Gastrocnemius medialis (tissue), 4 donors: ENCODE measurements at regions of chr16 and their contacts with region 1.

Region 1: DNA sequence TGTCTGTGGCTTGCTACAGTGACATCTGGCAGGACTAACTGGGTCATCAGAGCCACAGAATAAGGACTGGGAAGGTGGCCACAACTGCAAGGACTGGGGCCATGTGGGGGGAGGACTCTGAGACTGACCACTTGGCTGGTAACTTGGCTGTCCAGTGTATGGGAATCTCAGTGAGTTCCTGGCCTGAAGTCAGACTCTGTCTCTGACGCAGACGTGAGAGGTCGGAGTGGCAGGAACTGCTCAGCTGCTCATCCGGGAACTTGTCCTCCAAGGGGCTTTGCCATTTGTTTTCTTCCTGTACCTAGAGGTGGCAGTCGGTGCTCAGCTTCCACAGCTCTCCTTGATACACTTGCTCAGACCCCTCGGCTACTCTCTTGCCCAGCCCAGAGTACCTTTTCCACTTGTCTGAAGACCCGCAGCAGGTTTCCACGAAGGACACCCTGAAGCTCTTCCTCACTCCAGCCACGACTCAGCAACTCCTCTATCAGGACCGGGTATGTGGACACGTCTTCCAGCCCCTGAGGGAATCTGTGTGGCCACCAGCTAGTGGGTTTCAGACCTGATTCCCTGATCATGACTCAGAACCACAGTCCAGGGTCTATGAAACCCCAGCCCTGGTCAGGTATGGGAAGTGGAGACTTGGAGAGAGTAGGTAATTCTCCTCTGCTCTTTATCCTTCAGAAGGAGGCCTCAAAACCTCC is 7.3 kb upstream of the DPEP3 start:
- DNase-seq: peak; percentile 65 to 83
- ATAC-seq: peak; percentile 78 to 80
- H3K4me3 ChIP-seq: peak overlapping the region; percentile 10 to 49 (median 42)
- H3K27ac ChIP-seq: peak overlapping the region; percentile 83 to 93 (median 92)
- H3K4me1 ChIP-seq: peaks cover 64 to 65% of the 10 kb centered on the region in 2 donors
- H3K27me3 ChIP-seq: no peaks in the 10 kb centered on the region
- CTCF ChIP-seq: no peak
- POLR2A ChIP-seq: peak; percentile 53 to 62

Region 2: GRCh38 chr16:67277294-67277998 is 710.2 kb before region 1 on chr16:
- in situ Hi-C with region 1: no loop called
- intact Hi-C with region 1: no loop called
- DNase-seq: peak in 1 of 2 donors; percentile 38
- ATAC-seq: peak in 1 of 2 donors; percentile 39
- H3K4me3 ChIP-seq: no peak overlapping the region
- H3K27ac ChIP-seq: peak overlapping the region in 1 of 4 donors; percentile 45
- H3K4me1 ChIP-seq: no peaks in the 10 kb centered on the region
- H3K27me3 ChIP-seq: no peaks in the 10 kb centered on the region
- CTCF ChIP-seq: no peak
- POLR2A ChIP-seq: no peak

Region 3: DNA sequence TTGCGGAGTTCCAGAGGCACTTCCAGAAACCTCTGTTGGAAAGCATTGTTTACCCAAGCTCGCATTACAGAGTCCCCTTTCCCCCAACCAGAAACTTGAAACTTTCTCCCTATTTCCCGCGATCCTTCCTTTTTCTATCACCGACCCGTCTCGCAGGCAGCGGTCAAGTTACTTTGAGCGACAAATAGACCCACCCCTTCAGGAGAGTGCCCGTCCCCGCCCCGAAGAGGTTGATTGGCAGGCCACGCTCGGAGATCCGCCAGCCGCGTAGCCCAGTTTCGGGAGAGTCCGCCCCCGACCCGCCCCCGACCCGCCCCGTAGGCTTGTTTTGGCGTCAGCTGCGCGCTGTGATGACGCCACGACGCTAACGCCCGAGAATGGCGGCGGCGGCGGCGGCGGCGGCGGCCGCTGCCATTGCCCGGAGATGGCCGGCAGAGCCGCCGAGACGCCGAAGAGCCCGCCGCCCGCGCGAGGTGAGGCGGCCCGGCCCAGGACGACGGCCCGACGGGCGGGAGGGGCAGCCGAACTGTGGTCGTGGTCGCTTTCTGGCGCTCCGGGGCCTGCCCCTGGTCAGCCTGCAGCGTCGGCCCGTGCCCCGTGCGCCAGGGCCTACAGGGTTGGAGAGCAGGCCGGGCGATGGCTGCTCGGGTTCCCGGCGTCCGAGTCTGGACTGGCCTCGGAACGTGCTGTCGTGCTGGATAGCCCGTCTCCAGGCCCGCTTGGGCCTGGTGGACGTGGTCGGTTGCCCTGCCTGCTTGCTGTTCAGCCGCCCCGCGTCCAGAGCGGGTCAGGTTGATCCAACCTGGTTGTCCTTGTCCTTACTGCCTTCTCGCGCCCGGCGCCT is 94.5 kb before region 1 on chr16 and contains the start of gene PSKH1:
- in situ Hi-C with region 1: no loop called
- intact Hi-C with region 1: loop called (anchors 1 kb)
- DNase-seq: peak; percentile 95 to 97
- ATAC-seq: peak; percentile 93 to 95
- H3K4me3 ChIP-seq: peak within 1 kb of the TSS; percentile 87 to 99 (median 91)
- H3K27ac ChIP-seq: peak within 1 kb of the TSS; percentile 90 to 100 (median 96)
- H3K4me1 ChIP-seq: peaks cover 44 to 50% of the 10 kb centered on the region in 2 donors
- H3K27me3 ChIP-seq: no peaks in the 10 kb centered on the region
- CTCF ChIP-seq: peak in 2 of 5 experiments; percentile 20 to 24
- POLR2A ChIP-seq: peak; percentile 98
- total RNA-seq, gene PSKH1: 4.1 to 12.7 (median 6.9) TPM

Region 4: DNA sequence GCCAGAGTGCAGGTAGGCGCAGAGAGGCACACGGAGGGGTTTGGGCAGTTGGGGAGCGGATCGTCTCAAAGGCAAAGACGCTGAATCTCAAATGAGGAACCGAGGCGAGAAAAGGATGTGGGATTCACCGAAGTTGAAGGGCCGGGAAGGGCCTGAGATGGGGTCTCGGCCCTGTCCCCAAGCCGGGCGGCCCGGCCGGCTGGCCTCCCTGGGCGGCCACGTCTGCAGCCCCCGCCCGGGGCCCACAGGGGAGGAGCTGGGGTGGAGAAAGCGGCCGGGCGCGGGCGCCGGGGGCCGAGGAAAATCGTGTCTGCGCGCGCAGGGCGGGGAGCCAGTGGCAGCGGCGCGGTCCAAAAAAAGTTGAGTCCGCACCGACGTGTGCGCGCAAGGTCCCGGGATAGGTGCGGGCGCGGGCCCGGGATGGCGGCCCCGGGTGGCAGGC is 19.6 kb before region 1 on chr16:
- in situ Hi-C with region 1: no loop called
- intact Hi-C with region 1: loop called (anchors 2 kb)
- DNase-seq: no peak
- ATAC-seq: peak; percentile 17 to 19
- H3K4me3 ChIP-seq: peak overlapping the region; percentile 69 to 80 (median 80)
- H3K27ac ChIP-seq: peak overlapping the region; percentile 87 to 95 (median 89)
- H3K4me1 ChIP-seq: peaks cover 49 to 52% of the 10 kb centered on the region in 2 donors
- H3K27me3 ChIP-seq: no peaks in the 10 kb centered on the region
- CTCF ChIP-seq: no peak
- POLR2A ChIP-seq: no peak